Endothelial cell of umbilical vein (primary cell): ENCODE measurements at regions of chr17 and their contacts with region 1.

Region 1: DNA sequence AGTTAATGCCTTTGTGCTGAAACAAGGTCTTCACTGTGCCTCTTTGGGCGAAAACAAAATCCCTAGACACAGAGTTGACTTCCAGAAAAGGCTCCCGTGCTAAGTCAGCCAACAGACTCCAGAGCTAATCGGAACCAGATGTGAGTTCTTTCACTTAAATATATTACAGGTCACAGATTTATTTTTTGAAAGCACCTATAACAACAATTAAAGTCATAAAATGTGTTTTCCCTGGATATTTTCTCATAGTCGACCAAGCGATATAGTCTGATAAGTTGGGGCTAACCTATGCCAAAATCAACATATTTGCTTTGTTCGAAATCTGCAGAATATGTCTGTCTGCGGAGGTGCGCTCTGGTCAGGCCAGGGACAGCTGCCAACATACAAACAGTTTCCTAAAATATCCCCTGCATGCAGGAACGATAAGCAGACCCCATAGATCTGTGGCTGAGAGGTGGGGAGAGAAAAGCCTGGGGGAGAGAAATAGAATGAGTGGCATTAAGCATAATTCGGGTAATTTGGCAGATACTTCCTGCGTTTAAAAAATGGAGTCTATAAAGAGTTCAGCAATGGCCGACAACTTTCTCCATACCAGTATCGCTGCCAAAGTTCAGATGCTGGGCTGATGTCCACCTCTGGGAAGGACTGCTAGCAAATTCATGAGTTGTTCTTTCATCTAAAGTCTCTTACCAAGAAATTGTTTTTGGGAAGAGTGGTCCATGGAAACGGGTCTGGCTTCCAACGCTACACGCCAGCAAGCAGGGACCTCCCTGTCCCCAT is 50.8 kb upstream of the MYH10 start:
- DNase-seq: peak; percentile 98
- H3K4me3 ChIP-seq: no peak overlapping the region
- H3K27ac ChIP-seq: peak overlapping the region; percentile 57
- H3K4me1 ChIP-seq: peaks cover 17% of the 10 kb centered on the region
- H3K27me3 ChIP-seq: peaks cover 2 to 4% of the 10 kb centered on the region in 2 experiments
- CTCF ChIP-seq: no peak
- POLR2A ChIP-seq: no peak

Region 2: DNA sequence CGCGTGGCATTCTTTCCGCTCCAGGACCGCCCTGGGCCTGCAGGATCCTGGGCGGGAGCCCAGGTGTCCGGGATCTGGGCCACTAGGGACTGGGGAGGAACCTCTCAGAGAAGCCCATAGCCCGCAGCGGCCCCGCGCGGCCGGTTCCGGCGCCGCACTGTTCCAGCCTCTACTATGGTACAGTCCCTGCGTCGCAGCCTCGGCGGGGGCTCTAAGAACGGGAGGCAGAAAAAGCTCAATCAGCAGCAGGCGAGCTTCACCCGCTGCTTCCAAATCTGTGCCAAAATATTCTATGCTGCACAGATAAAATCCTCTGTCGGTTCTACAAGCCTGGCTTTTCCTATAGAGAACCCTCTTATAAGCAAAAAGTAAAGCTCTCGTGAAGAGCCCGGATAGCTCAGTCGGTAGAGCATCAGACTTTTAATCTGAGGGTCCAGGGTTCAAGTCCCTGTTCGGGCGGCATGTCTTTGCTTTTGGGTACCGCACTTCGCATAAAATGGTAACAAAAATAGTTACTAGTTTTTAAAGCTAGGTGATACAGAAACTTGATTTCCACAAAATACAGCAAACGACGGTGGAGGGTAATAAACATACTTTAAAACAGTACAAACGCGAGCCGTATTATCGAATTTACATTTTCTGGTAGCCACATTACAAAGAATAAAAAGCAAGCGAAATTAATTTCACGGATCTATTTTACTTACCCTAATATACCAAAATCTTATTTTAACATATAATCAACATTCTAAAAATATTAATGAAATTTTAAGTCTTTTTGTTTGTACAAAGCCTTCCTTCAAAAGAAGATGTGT is 562.4 kb before region 1 on chr17:
- CTCF ChIA-PET with region 1: no interaction called
- POLR2A ChIA-PET with region 1: no interaction called
- dilution Hi-C with region 1: no loop called
- intact Hi-C with region 1: no loop called
- DNase-seq: peak; percentile 86
- H3K4me3 ChIP-seq: peak overlapping the region; percentile 49 to 88 (median 79)
- H3K27ac ChIP-seq: peak overlapping the region; percentile 10
- H3K4me1 ChIP-seq: peaks cover 31% of the 10 kb centered on the region
- H3K27me3 ChIP-seq: peaks cover 30 to 32% of the 10 kb centered on the region in 2 experiments
- CTCF ChIP-seq: peak; percentile 90 to 93
- POLR2A ChIP-seq: no peak

Region 3: GRCh38 chr17:8503368-8503767 is 178.0 kb before region 1 on chr17:
- CTCF ChIA-PET with region 1: no interaction called
- POLR2A ChIA-PET with region 1: no interaction called
- dilution Hi-C with region 1: no loop called
- intact Hi-C with region 1: no loop called
- DNase-seq: peak; percentile 8
- H3K4me3 ChIP-seq: no peak overlapping the region
- H3K27ac ChIP-seq: no peak overlapping the region
- H3K4me1 ChIP-seq: no peaks in the 10 kb centered on the region
- H3K27me3 ChIP-seq: no peaks in the 10 kb centered on the region
- CTCF ChIP-seq: no peak
- POLR2A ChIP-seq: no peak

Region 4: GRCh38 chr17:8630802-8631553 is 50.4 kb before region 1 on chr17:
- CTCF ChIA-PET with region 1: no interaction called
- POLR2A ChIA-PET with region 1: no interaction called
- dilution Hi-C with region 1: no loop called
- intact Hi-C with region 1: loop called (anchors 1 kb)
- DNase-seq: peak; percentile 100
- H3K4me3 ChIP-seq: peak overlapping the region; percentile 68 to 99 (median 98)
- H3K27ac ChIP-seq: peak overlapping the region; percentile 35
- H3K4me1 ChIP-seq: peaks cover 15% of the 10 kb centered on the region
- H3K27me3 ChIP-seq: peaks cover 0 to 5% of the 10 kb centered on the region in 2 experiments
- CTCF ChIP-seq: no peak
- POLR2A ChIP-seq: no peak

Region 5: GRCh38 chr17:8732406-8733085 is 51.2 kb after region 1 on chr17:
- CTCF ChIA-PET with region 1: no interaction called
- POLR2A ChIA-PET with region 1: no interaction called
- dilution Hi-C with region 1: no loop called
- intact Hi-C with region 1: no loop called
- DNase-seq: no peak
- H3K4me3 ChIP-seq: no peak overlapping the region
- H3K27ac ChIP-seq: no peak overlapping the region
- H3K4me1 ChIP-seq: no peaks in the 10 kb centered on the region
- H3K27me3 ChIP-seq: peaks cover 0 to 6% of the 10 kb centered on the region in 2 experiments
- CTCF ChIP-seq: no peak
- POLR2A ChIP-seq: no peak

Region 6: DNA sequence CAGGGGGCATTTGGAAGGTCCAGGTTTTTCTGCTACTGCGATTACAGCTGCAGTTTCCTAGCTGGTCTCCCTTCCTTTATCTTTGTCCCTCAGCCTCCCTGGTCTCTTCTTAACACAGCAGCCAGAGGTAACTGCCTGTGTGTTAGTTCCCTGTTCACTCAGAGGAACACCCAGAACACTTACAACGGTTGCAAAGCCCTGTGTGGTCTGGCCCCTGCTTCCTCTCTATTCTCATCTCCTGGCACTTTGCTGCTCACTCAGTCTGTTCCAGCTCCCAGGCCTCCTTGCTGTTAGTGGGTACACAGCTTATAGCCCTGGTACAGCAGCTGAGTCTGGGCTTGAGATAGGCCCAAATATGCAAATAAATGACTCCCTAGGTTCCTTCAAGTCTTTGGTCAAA is 356.4 kb after region 1 on chr17:
- CTCF ChIA-PET with region 1: no interaction called
- POLR2A ChIA-PET with region 1: no interaction called
- dilution Hi-C with region 1: no loop called
- intact Hi-C with region 1: no loop called
- DNase-seq: no peak
- H3K4me3 ChIP-seq: no peak overlapping the region
- H3K27ac ChIP-seq: no peak overlapping the region
- H3K4me1 ChIP-seq: no peaks in the 10 kb centered on the region
- H3K27me3 ChIP-seq: no peaks in the 10 kb centered on the region
- CTCF ChIP-seq: no peak
- POLR2A ChIP-seq: no peak